Sigmoid colon (tissue), 7 donors: ENCODE measurements at regions of chr6 and their contacts with region 1.

Region 1: DNA sequence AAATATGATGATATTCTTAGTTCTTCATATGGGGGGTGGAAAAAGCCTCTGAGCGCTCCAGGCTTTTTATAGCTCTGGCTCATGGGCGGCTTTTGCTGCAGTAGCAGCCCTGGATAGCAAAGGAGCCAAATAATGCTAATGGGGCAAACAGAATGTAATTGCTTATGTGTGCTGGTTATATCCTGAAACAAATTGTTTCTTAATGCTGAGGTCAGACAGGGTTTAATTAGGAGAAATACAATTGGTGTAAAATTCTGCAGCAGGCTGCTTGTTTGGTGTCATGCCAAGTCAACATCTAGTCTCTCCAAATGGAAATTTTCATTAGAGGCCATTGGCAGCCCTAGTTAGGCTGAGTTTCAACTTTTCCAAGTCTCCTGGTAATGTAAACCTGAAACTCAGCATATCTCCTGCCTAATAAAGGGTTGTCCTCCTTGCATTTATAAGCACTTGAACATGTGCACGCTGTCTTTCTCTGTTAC is 530.1 kb upstream of the NOX3 start:
- DNase-seq: no peak
- H3K4me3 ChIP-seq: no peak overlapping the region
- H3K27ac ChIP-seq: peak overlapping the region; percentile 45 to 78 (median 67)
- H3K4me1 ChIP-seq: peaks cover 0 to 37% (median 31%) of the 10 kb centered on the region in 4 donors
- H3K27me3 ChIP-seq: no peaks in the 10 kb centered on the region
- CTCF ChIP-seq: no peak
- EP300 ChIP-seq: peak in 1 of 4 donors; percentile 15
- POLR2A ChIP-seq: no peak

Region 2: GRCh38 chr6:156167625-156168071 is 181.9 kb after region 1 on chr6:
- intact Hi-C with region 1: loop called (anchors 10 kb)
- DNase-seq: no peak
- H3K4me3 ChIP-seq: peak overlapping the region; percentile 15 to 42 (median 38)
- H3K27ac ChIP-seq: peak overlapping the region; percentile 74 to 80 (median 76)
- H3K4me1 ChIP-seq: peaks cover 0 to 36% (median 30%) of the 10 kb centered on the region in 4 donors
- H3K27me3 ChIP-seq: no peaks in the 10 kb centered on the region
- CTCF ChIP-seq: no peak
- EP300 ChIP-seq: no peak
- POLR2A ChIP-seq: no peak